ENCODE measurements at regions of chr6 and their contacts with region 1.

Region 1: DNA sequence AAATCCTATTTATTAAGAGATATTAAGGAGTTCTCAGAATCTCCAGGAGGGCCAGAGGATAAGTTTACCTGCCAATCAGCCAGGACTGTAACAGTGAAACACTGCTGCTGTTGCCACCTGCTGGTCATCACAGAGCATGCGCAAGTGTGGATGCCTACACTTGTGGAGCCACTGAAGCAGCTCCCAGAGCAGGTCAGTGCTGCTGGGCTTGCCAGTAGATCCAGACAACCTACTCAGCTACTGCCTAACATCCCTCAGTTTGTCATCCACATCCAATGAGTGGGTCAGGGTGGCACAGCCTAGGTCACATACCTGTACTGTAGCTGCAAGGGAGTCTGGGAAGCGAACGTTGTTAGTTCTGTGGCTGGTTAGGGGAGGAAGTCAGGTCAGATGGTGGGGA is 18.3 kb upstream of the NHSL1 start:
- DNase-seq: peak; percentile 31 to 77
- ATAC-seq: peak; percentile 68 to 74 (median 68)
- H3K4me3 ChIP-seq: no peak overlapping the region
- H3K4me3 Mint-ChIP-seq: no peak overlapping the region
- H3K27ac ChIP-seq: no peak overlapping the region
- H3K27ac Mint-ChIP-seq: no peak overlapping the region
- H3K4me1 ChIP-seq: peaks cover 10% of the 10 kb centered on the region
- H3K4me1 Mint-ChIP-seq: peaks cover 21 to 27% of the 10 kb centered on the region in 2 donors
- H3K27me3 ChIP-seq: no peaks in the 10 kb centered on the region
- H3K27me3 Mint-ChIP-seq: peaks cover 16 to 26% of the 10 kb centered on the region in 2 donors
- CTCF ChIP-seq: peak; percentile 89

Region 2: GRCh38 chr6:138428944-138429598 is 88.6 kb before region 1 on chr6:
- intact Hi-C with region 1: loop called (anchors 1 kb)
- DNase-seq: peak in 1 of 2 donors; percentile 73
- ATAC-seq: peak; percentile 59 to 62 (median 60)
- H3K4me3 ChIP-seq: no peak overlapping the region
- H3K4me3 Mint-ChIP-seq: no peak overlapping the region
- H3K27ac ChIP-seq: no peak overlapping the region
- H3K27ac Mint-ChIP-seq: no peak overlapping the region
- H3K4me1 ChIP-seq: no peaks in the 10 kb centered on the region
- H3K4me1 Mint-ChIP-seq: no peaks in the 10 kb centered on the region
- H3K27me3 ChIP-seq: no peaks in the 10 kb centered on the region
- H3K27me3 Mint-ChIP-seq: peaks cover 6 to 7% of the 10 kb centered on the region in 2 donors
- CTCF ChIP-seq: peak; percentile 74

Measured in natural killer cell (primary cell).